ENCODE measurements at regions of chr2 and their contacts with region 1.

Region 1: DNA sequence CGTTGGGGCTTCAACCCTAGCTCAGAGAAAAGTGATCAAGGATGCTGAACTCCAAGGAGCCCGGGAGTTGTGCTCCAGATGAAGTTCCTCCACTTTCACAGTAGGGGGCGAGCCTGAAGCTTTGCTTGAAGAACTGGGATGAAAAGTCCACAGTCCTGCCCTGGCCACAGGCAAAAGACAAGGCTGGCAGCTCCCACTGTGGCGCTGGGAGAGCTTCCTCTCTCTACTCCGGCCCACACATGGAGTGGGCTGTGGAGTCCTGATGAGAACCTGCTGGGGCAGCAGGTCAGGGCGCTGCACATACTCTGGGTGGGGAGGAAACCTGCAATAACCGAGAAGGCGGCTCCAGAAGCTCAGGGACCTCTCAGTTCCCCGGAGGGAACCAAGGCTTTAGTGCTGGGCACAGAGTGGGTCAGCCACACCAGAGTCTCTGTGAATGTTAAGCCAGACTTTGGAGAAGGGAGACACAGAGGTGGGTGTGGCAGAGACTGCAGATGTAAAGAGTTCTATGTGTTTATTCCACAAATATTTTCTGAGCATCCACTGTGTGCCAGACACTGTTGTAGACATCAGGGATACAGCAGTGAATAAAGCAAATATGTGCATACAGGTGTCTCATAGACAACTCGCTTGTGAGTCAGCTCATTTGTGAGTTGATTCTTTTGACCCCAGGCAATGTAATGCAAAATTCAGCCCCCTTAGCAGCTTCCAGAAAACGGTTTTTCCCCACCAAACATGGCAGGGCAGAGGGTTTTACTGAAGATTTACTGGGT is 48.0 kb upstream of the MRPL33 start:
- DNase-seq: peak; percentile 85
- H3K4me3 ChIP-seq: no peak overlapping the region; a peak in 1 of 4 replicates
- H3K27ac ChIP-seq: no peak overlapping the region
- H3K4me1 ChIP-seq: peaks cover 7 to 24% of the 10 kb centered on the region in 2 experiments; a peak in 3 of 4 replicates
- H3K27me3 ChIP-seq: no peaks in the 10 kb centered on the region
- CTCF ChIP-seq: peak; percentile 84
- EP300 ChIP-seq: no peak
- RAD21 ChIP-seq: peak; percentile 83

Region 2: DNA sequence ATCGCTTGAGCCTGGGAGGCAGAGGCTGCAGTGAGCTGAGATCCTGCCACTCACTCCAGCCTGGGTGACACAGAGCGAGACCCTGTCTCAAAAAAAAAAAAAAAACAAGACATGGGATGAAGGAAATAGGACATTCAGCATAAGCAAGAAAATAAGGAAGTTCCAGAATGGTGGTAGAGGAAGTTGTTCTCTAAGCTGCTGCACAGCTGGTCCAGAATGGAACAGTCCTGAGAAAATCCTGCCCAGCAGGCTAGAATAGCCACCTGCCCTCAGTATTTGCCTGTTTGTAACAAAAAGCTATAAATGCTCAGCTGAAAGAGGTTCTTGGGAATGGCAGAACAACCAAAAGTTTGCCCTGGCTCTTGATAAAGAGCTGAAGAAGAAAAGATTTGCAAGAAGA is 764.2 kb before region 1 on chr2:
- CTCF ChIA-PET with region 1: no interaction called
- POLR2A ChIA-PET with region 1: no interaction called
- DNase-seq: no peak
- H3K4me3 ChIP-seq: no peak overlapping the region
- H3K27ac ChIP-seq: no peak overlapping the region
- H3K4me1 ChIP-seq: peaks cover 0 to 3% of the 10 kb centered on the region in 2 experiments; a peak in 1 of 4 replicates
- H3K27me3 ChIP-seq: peaks cover 48% of the 10 kb centered on the region
- CTCF ChIP-seq: no peak
- EP300 ChIP-seq: no peak
- RAD21 ChIP-seq: no peak

Region 3: DNA sequence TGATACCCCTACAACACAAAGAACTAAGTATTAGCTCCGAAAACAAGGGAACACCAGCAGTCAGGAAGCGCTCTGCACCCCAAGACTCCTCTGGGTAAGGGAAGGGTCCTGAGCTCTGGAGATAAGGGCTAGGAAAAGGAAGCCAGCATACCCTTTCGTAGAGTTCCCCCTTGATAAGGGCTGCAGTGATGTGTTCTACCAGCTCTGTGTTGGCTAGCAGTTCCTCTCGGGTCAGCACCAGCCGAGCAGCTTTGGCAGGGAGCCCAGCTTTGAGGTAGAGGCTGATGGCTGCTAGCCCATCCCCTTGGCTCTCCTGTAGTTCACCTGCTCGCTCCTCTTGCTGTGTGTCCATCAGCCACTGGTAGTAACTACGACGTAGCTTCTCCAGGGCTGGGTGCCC is 262.4 kb before region 1 on chr2:
- CTCF ChIA-PET with region 1: no interaction called
- POLR2A ChIA-PET with region 1: no interaction called
- DNase-seq: no peak
- H3K4me3 ChIP-seq: no peak overlapping the region
- H3K27ac ChIP-seq: no peak overlapping the region
- H3K4me1 ChIP-seq: no peaks in the 10 kb centered on the region
- H3K27me3 ChIP-seq: no peaks in the 10 kb centered on the region
- CTCF ChIP-seq: no peak
- EP300 ChIP-seq: no peak
- RAD21 ChIP-seq: no peak

Region 4: GRCh38 chr2:27638037-27638637 is 85.4 kb before region 1 on chr2:
- CTCF ChIA-PET with region 1: no interaction called
- POLR2A ChIA-PET with region 1: no interaction called
- DNase-seq: no peak
- H3K4me3 ChIP-seq: no peak overlapping the region
- H3K27ac ChIP-seq: peak overlapping the region in 1 of 2 experiments; percentile 56; a peak in 2 of 4 replicates
- H3K4me1 ChIP-seq: no peaks in the 10 kb centered on the region; a peak in 1 of 4 replicates
- H3K27me3 ChIP-seq: no peaks in the 10 kb centered on the region
- CTCF ChIP-seq: no peak
- EP300 ChIP-seq: 0 out of 4 replicates have a peak, but pooled peaks of 1 of the 2 experiments have one; percentile 25
- RAD21 ChIP-seq: no peak

Region 5: GRCh38 chr2:27703638-27704341 is 19.8 kb before region 1 on chr2:
- CTCF ChIA-PET with region 1: interaction called, 42 read pairs
- POLR2A ChIA-PET with region 1: no interaction called
- DNase-seq: peak; percentile 88
- H3K4me3 ChIP-seq: no peak overlapping the region; a peak in 1 of 4 replicates
- H3K27ac ChIP-seq: peak overlapping the region in 1 of 2 experiments; percentile 29; a peak in 1 of 4 replicates
- H3K4me1 ChIP-seq: peaks cover 10 to 16% of the 10 kb centered on the region in 2 experiments; a peak in 3 of 4 replicates
- H3K27me3 ChIP-seq: no peaks in the 10 kb centered on the region
- CTCF ChIP-seq: peak; percentile 99
- EP300 ChIP-seq: peak in 1 of 2 experiments; percentile 48; a peak in 1 of 4 replicates
- RAD21 ChIP-seq: peak; percentile 98

Region 6: GRCh38 chr2:27754138-27754588 is 30.6 kb after region 1 on chr2:
- CTCF ChIA-PET with region 1: interaction called, 18 read pairs
- POLR2A ChIA-PET with region 1: no interaction called
- DNase-seq: peak; percentile 83
- H3K4me3 ChIP-seq: peak overlapping the region in 1 of 2 experiments; percentile 13; a peak in 1 of 4 replicates
- H3K27ac ChIP-seq: no peak overlapping the region
- H3K4me1 ChIP-seq: no peaks in the 10 kb centered on the region
- H3K27me3 ChIP-seq: no peaks in the 10 kb centered on the region
- CTCF ChIP-seq: peak; percentile 98
- EP300 ChIP-seq: no peak
- RAD21 ChIP-seq: peak; percentile 100

Region 7: DNA sequence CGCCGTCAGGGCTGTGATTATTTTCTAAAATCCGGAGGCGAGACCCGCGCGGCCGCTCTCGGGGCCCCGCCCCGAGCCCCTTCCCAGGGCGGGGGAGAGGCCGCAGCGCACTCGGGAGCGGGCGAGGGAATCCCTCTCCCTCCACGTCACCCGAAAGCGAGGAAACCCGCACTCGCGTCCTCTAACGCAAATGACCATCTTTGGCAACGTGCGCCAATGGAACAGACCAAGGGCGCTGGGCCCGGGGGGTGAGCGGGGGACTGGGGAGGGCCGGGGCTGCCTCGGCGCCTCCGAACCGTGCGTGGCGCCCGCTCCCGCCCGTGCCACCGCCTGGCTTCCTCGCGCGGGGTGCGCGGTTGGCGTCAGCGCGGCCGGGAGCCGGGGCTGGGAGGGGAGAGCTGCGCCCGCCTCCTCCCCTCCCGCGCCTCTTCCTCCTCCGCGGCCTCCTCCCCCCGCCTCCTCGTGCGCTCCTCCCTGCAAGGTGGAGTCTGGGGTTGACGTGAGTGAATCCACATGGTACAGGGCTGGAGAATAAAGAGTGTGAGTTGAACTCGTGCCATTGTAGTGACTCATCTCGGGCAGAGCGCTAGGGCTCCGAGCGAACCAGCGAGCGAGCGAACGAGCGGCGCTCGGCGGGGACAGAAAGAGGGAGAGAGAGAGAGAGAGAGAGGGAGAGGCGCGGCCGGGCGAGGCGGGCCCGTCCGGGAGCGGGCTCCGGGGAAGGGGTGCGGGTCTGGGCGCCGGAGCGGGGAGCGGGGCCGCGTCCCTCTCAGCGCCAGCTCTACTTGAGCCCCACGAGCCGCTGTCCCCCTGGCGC is 668.9 kb after region 1 on chr2 and contains the start of gene FOSL2:
- CTCF ChIA-PET with region 1: interaction called, 15 read pairs
- POLR2A ChIA-PET with region 1: interaction called, 7 read pairs
- DNase-seq: peak; percentile 98
- H3K4me3 ChIP-seq: peak within 1 kb of the TSS; percentile 83 to 84
- H3K27ac ChIP-seq: peak within 1 kb of the TSS; percentile 86 to 97
- H3K4me1 ChIP-seq: peaks cover 23 to 24% of the 10 kb centered on the region in 2 experiments
- H3K27me3 ChIP-seq: no peaks in the 10 kb centered on the region
- CTCF ChIP-seq: no peak
- EP300 ChIP-seq: 0 out of 4 replicates have a peak, but pooled peaks have one; percentile 8 to 24
- RAD21 ChIP-seq: peak; percentile 34
- polyA plus RNA-seq, gene FOSL2: 30.1 and 41.7 TPM in 2 replicates

Region 8: GRCh38 chr2:28413142-28413898 is 689.8 kb after region 1 on chr2:
- CTCF ChIA-PET with region 1: interaction called, 15 read pairs
- POLR2A ChIA-PET with region 1: no interaction called
- DNase-seq: no peak
- H3K4me3 ChIP-seq: no peak overlapping the region
- H3K27ac ChIP-seq: no peak overlapping the region
- H3K4me1 ChIP-seq: 0 out of 4 replicates have a peak, but pooled peaks cover 0 to 5% of the 10 kb centered on the region in 2 experiments
- H3K27me3 ChIP-seq: no peaks in the 10 kb centered on the region
- CTCF ChIP-seq: no peak; the same call in 1 of the 2 replicates
- EP300 ChIP-seq: no peak
- RAD21 ChIP-seq: no peak

Measured in SK-N-SH (cell line).